ENCODE measurements at regions of chr3 and their contacts with region 1.

Region 1: DNA sequence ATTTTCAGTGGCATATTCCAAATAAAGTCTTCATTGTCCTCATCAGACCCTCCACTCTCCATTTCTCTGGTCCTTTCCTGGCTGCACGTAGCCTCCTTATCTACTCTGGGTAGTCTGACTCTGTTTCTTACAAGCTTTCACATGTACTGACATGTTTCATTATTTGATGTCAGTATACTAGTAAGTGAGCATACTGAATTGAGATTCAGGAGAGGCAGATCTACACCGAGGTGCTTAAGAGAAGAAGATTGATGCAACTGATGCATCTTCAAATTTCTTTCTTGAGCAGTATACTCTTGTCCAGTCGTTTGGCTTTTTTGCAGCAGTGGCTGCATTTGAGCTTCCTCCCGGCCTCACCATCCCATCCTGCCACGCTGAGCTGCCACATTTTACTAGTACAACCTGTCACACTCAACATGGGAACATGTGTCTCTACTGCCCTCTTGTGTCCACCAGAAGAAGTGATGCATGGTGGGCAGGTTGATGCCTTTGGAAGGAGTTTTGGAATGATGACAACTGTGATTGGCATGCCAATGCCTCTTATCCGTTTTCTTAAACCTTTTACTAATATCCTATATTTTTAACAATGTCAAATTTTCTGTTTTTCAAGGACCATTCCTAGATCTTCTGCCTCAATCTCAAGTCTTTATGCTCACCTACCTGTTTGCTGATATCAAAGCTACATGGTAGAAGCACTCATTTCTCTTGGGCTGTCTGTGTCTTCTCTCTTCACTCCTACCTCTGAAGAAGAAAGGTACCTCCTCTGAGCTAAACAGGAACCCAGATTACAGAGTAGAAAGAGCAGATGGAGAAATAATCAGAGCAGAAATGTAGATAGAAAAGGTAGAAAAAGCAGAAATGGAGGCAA is 38.7 kb downstream of the GUCA1C start:
- DNase-seq: peak; percentile 57 to 73
- ATAC-seq: peak; percentile 90 to 96
- H3K4me3 ChIP-seq: no peak overlapping the region
- H3K27ac ChIP-seq: no peak overlapping the region
- H3K4me1 ChIP-seq: peaks cover 4% of the 10 kb centered on the region; the same call in 1 of the 3 replicates
- CTCF ChIP-seq: peak; percentile 75
- EP300 ChIP-seq: no peak
- POLR2A ChIP-seq: no peak
- RAD21 ChIP-seq: peak; percentile 80 to 83

Region 2: DNA sequence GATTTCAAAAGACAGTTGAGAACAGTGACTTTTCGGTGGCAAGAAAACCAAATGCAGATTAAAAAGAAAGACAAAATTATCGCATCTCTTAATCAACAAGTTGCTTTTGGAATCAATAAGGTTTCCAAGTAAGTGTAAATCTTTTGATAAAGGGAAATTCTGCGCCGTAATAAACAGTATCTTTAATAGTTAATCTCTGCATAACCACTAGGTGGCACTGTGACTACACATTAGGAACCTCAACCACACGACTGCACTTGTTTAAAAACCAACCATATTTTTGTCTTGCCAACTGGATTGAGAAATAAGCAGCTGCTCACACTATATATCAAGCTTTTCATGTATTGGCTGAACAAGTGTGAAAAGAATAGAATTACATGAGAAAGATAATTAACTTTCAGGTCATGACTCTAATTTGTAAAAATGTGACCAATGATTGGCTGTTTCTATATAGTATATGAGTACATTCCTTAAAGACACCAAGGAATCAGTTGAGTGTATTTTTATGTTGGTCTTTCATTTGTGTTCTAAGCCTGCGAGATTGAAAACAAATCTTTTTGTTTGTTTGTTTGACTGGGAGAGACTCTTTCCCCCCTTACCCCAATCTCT is 252.8 kb before region 1 on chr3:
- CTCF ChIA-PET with region 1: interaction called, 46 read pairs
- POLR2A ChIA-PET with region 1: no interaction called
- DNase-seq: peak; percentile 42 to 69
- ATAC-seq: peak; percentile 73 to 85; a peak in 5 of 6 replicates
- H3K4me3 ChIP-seq: no peak overlapping the region
- H3K27ac ChIP-seq: no peak overlapping the region
- H3K4me1 ChIP-seq: no peaks in the 10 kb centered on the region
- CTCF ChIP-seq: peak; percentile 83
- EP300 ChIP-seq: no peak
- POLR2A ChIP-seq: no peak
- RAD21 ChIP-seq: peak; percentile 85

Region 3: DNA sequence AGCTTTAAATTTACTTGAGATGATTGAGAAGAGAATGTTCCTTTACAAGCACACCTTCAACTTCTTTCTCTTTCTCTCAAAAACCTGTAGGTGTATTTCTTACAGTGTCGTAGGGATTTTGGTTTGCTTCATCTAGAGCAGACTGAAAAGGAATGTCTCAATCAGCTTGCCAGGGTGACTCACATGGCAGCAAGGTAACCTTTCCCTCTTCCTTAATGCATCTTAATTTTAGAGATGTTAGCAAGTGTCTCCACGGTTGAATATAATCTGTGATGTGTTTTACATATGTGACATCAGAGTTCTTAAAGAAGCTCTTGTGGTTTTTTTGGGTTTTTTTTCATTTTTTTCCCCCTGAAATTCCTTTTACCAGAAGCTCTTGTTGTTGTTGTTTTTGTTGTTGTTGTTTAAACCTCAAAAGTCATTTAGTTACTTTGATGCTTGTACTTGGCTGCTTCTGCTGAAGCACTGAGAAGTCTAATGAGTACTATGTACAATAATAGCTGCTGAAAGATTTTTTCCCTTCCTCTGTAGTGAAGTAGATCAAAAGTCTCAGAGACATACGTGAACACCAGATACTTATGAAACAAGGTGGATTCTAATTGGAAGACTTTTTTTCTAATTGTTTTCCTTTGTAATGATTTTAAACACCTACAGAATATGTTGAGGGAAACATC is 240.9 kb before region 1 on chr3:
- CTCF ChIA-PET with region 1: interaction called, 10 read pairs
- POLR2A ChIA-PET with region 1: no interaction called
- DNase-seq: no peak
- ATAC-seq: no peak
- H3K4me3 ChIP-seq: no peak overlapping the region
- H3K27ac ChIP-seq: no peak overlapping the region
- H3K4me1 ChIP-seq: no peaks in the 10 kb centered on the region
- CTCF ChIP-seq: no peak
- EP300 ChIP-seq: no peak
- POLR2A ChIP-seq: no peak
- RAD21 ChIP-seq: no peak

Region 4: DNA sequence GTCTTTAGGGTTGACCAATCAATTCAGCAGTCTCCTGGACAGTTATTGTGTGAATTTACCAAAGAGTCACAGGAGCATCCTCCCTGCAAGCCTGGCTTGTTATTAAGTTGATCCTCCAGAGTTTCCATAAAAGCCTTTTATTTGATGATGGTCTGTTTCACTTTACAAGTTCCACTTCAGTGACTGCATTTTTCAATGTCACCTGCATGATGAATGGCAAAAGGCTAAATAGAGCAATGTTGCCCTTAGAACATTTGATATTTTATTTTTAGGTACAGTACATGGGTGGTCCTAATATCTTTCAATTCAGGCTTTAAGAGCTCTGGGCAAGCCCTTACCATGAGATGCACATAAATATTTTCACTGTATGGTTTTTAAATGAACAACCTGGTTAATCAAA is 16.0 kb after region 1 on chr3:
- CTCF ChIA-PET with region 1: interaction called, 18 read pairs
- POLR2A ChIA-PET with region 1: no interaction called
- DNase-seq: no peak
- ATAC-seq: no peak
- H3K4me3 ChIP-seq: no peak overlapping the region
- H3K27ac ChIP-seq: no peak overlapping the region
- H3K4me1 ChIP-seq: no peaks in the 10 kb centered on the region
- CTCF ChIP-seq: no peak
- EP300 ChIP-seq: no peak
- POLR2A ChIP-seq: no peak
- RAD21 ChIP-seq: no peak

Measured in A549 (cell line).